Activated B cell treated with CpG ODN at 0.5 μM for 24 hours (primary cell): ENCODE measurements at regions of chr12 and their contacts with region 1.

Region 1: DNA sequence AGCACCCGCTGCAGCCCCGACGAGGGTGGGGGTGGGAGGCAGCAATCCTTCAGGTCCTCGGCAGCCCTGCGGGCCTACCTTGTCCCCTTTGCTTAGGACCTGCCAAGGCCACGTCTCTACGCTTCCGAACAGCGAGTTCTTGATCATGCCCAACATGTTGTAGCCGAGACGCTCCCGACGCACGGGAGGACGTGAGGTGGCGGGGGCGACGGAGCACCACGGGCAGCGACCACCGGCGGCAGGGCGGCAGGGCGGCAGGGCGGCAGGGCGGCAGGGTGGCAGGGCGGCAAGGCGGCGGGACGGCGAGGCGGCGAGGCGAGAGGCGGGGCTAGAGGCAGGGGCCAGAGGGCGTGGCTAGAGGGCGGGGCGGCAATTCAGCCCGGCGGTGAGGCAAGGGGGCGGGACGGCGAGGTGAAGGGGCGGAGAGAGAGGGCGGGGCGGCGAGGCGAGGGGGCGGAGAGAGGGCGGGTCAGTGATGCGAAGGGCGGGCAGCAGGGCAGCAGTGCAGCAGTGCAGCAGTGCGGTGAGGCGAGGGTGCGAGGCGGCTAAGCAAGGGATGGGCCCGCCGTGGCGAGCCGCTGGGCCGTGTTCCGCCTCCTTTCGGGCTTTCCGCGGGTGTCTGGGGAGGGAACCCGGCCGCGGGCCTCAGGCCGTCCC is at the start of gene HEBP1:
- DNase-seq: peak; percentile 97
- ATAC-seq: peak; percentile 92
- H3K4me3 Mint-ChIP-seq: peak within 1 kb of the TSS; percentile 87
- H3K27ac Mint-ChIP-seq: peak within 1 kb of the TSS; percentile 84
- H3K4me1 Mint-ChIP-seq: peaks cover 27% of the 10 kb centered on the region
- H3K27me3 Mint-ChIP-seq: no peaks in the 10 kb centered on the region
- CTCF ChIP-seq: no peak
- total RNA-seq, gene HEBP1: 9.7 and 12.0 TPM in 2 replicates

Region 2: GRCh38 chr12:12611512-12612306 is 388.4 kb before region 1 on chr12 and contains the start of gene CREBL2:
- CTCF ChIA-PET with region 1: no interaction called
- POLR2A ChIA-PET with region 1: no interaction called
- intact Hi-C with region 1: loop called (anchors 5 kb)
- DNase-seq: peak; percentile 75
- ATAC-seq: peak; percentile 91
- H3K4me3 Mint-ChIP-seq: peak within 1 kb of the TSS; percentile 94
- H3K27ac Mint-ChIP-seq: peak within 1 kb of the TSS; percentile 97
- H3K4me1 Mint-ChIP-seq: peaks cover 32% of the 10 kb centered on the region
- H3K27me3 Mint-ChIP-seq: no peaks in the 10 kb centered on the region
- CTCF ChIP-seq: no peak
- total RNA-seq, gene CREBL2: 10.1 and 10.8 TPM in 2 replicates

Region 3: GRCh38 chr12:12803186-12803585 is 196.9 kb before region 1 on chr12:
- CTCF ChIA-PET with region 1: no interaction called
- POLR2A ChIA-PET with region 1: no interaction called
- intact Hi-C with region 1: loop called (anchors 1 kb)
- DNase-seq: no peak
- ATAC-seq: peak; percentile 70
- H3K4me3 Mint-ChIP-seq: peak overlapping the region; percentile 12
- H3K27ac Mint-ChIP-seq: peak overlapping the region; percentile 6
- H3K4me1 Mint-ChIP-seq: peaks cover 65% of the 10 kb centered on the region
- H3K27me3 Mint-ChIP-seq: no peaks in the 10 kb centered on the region
- CTCF ChIP-seq: no peak

Region 4: GRCh38 chr12:12916135-12916944 is 83.7 kb before region 1 on chr12:
- CTCF ChIA-PET with region 1: no interaction called
- POLR2A ChIA-PET with region 1: no interaction called
- intact Hi-C with region 1: loop called (anchors 1 kb)
- DNase-seq: peak; percentile 73
- ATAC-seq: peak; percentile 99
- H3K4me3 Mint-ChIP-seq: no peak overlapping the region
- H3K27ac Mint-ChIP-seq: no peak overlapping the region
- H3K4me1 Mint-ChIP-seq: peaks cover 8% of the 10 kb centered on the region
- H3K27me3 Mint-ChIP-seq: peaks cover 16% of the 10 kb centered on the region
- CTCF ChIP-seq: peak; percentile 86

Region 5: DNA sequence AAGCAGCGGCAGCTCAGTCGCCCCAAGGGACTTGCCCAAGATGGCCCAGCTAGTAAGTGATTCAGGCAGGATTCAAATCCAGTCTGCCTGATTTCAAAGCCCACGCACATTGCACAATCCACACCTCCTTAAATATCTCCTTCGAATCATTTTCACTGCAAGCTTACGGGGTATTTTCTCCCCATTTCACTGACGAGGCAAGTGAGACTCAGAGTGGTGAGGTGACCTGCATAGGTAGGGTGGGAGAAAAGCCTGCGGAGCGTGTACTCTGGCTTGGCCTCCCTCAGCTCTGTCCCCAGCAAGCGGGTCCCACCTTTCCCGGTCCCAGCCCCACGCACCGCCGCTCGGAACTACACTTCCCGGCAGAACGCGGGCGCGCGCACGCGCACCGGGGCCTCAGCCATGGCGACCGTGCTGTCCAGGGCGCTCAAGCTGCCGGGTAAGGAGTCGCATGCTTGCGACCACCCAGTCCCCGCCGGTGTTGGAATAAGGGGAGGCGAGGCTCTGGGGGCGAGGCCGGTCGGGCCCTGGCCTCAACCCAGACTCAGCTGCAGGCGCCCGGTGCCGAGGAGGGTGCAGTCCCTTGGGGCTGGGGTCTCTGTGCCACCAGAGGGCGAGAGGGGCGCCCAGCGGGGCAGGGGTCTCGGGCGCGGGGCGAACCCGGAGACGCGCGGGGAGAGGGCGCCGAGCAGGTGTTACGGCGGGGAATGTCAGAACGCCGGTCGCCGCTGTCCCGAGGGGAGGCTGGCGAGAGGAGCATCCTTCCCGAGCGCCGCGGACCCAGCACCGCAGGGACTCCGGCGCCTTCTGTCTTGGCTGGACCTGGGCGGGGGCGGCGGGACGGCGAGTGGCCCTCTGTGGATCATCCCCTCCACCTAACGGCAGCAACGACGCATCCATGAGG is 44.2 kb after region 1 on chr12 and contains the start of gene FAM234B:
- CTCF ChIA-PET with region 1: no interaction called
- POLR2A ChIA-PET with region 1: no interaction called
- intact Hi-C with region 1: loop called (anchors 1 kb)
- DNase-seq: peak; percentile 73
- ATAC-seq: peak; percentile 96
- H3K4me3 Mint-ChIP-seq: peak within 1 kb of the TSS; percentile 89
- H3K27ac Mint-ChIP-seq: peak within 1 kb of the TSS; percentile 80
- H3K4me1 Mint-ChIP-seq: peaks cover 18% of the 10 kb centered on the region
- H3K27me3 Mint-ChIP-seq: no peaks in the 10 kb centered on the region
- CTCF ChIP-seq: no peak
- total RNA-seq, gene FAM234B: 4.7 and 6.3 TPM in 2 replicates

Region 6: GRCh38 chr12:13173012-13173932 is 173.2 kb after region 1 on chr12:
- CTCF ChIA-PET with region 1: no interaction called
- POLR2A ChIA-PET with region 1: no interaction called
- intact Hi-C with region 1: no loop called
- DNase-seq: peak; percentile 20
- ATAC-seq: peak; percentile 96
- H3K4me3 Mint-ChIP-seq: peak overlapping the region; percentile 35
- H3K27ac Mint-ChIP-seq: peak overlapping the region; percentile 18
- H3K4me1 Mint-ChIP-seq: peaks cover 22% of the 10 kb centered on the region
- H3K27me3 Mint-ChIP-seq: peaks cover 22% of the 10 kb centered on the region
- CTCF ChIP-seq: no peak

Region 7: DNA sequence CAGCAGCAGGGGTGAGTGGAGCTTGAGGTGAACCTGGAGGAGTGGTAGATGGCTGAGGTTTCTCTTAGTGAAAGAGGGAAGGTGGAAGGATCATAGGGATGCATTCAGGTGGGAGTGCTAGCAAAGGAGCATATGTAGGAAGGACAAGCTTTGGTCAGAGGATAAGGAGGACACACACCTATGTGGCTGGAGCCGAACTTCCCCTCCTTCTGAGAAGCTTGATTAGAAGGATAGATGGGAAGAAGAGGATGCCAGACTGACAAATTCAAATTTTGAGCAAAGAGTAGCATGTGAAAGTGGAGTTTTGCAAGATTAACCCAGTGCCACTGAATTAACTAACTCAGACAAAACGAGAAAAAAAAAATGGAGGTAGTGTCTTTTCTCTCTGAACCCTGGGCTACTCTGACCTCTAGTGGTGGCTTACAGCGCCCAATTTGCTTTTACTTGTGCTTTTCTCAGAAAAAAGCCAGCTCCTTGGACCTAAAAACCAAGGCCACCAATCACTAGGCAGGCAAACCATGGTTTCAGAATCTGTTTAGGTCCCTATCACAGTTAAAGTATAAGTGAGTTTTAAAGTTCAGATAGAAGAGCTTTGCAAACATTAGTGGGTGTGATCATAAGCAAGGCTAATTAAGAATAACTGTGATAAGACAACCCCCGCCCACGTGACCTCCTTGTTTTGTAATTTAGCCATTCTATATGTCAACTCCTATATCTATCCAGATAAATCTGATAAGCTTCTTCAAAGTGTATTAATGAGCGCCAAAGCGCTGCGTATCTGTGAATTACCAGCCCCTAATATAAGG is 212.0 kb after region 1 on chr12:
- CTCF ChIA-PET with region 1: interaction called, 3 read pairs
- POLR2A ChIA-PET with region 1: no interaction called
- intact Hi-C with region 1: loop called (anchors 1 kb)
- DNase-seq: peak; percentile 31
- ATAC-seq: peak; percentile 77
- H3K4me3 Mint-ChIP-seq: no peak overlapping the region
- H3K27ac Mint-ChIP-seq: no peak overlapping the region
- H3K4me1 Mint-ChIP-seq: peaks cover 4% of the 10 kb centered on the region
- H3K27me3 Mint-ChIP-seq: peaks cover 18% of the 10 kb centered on the region
- CTCF ChIP-seq: no peak